ENCODE measurements at regions of chr15 and their contacts with region 1.

Region 1: GRCh38 chr15:40217159-40217824 is 21.6 kb upstream of the PAK6 start:
- DNase-seq: peak; percentile 55
- H3K4me3 ChIP-seq: no peak overlapping the region
- H3K27ac ChIP-seq: no peak overlapping the region
- H3K4me1 ChIP-seq: peaks cover 0 to 9% (median 3%) of the 10 kb centered on the region in 4 donors
- H3K27me3 ChIP-seq: no peaks in the 10 kb centered on the region
- CTCF ChIP-seq: peak; percentile 77 to 93 (median 89)
- EP300 ChIP-seq: no peak
- POLR2A ChIP-seq: no peak

Region 2: DNA sequence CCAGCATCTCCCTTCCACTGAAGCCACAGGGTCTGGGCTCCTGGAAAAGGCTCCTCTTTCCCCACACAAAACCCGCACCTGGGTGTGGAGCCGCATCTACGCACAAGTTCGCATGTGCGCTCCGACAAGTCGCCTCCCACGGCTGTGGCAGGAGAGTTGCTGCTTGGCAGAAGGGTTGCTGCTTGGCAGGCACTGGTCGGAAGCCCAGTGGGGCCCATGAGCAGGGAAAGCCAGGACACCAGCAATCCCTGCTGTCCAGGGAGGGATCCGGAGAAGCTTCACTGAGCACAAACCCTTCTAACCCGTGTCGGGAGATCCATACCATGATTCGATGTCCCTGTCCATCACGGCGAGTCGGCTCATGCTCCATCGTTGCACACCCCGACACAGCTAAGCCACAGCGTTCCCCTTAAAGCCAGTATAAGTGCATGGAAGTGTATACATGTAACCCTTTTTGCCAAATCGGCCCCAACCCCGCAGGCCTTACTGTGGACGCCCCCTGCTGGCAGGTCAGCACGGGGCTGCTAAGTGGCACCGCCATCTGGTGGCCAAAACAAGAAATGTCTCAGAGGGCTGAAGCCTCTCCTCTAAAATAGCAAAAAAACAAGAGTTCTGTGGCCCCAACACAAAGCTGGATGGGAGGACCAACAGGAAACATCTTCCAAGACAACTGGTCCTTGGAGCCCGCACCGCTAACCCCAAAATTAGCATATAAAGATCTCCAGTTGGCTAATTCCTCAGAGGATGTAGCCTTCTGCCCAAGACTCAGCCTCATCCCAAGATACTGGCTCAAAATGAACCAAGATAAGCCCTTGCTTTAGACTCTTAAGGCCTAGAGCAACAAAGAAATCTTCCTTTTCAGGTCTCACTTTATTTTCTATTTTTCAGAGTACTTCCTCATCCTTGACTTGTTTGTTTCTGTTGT is 57.3 kb after region 1 on chr15:
- in situ Hi-C with region 1: loop called in 3 of 4 experiments (anchors 5 kb)
- intact Hi-C with region 1: loop called (anchors 2 kb)
- DNase-seq: peak; percentile 86
- H3K4me3 ChIP-seq: no peak overlapping the region
- H3K27ac ChIP-seq: no peak overlapping the region
- H3K4me1 ChIP-seq: peaks cover 0 to 5% (median 3%) of the 10 kb centered on the region in 4 donors
- H3K27me3 ChIP-seq: peaks cover 9% of the 10 kb centered on the region
- CTCF ChIP-seq: peak; percentile 100
- EP300 ChIP-seq: no peak
- POLR2A ChIP-seq: no peak

Region 3: GRCh38 chr15:40549894-40550293 is 332.6 kb after region 1 on chr15:
- in situ Hi-C with region 1: no loop called
- intact Hi-C with region 1: loop called (anchors 5 kb)
- DNase-seq: no peak
- H3K4me3 ChIP-seq: no peak overlapping the region
- H3K27ac ChIP-seq: peak overlapping the region in 3 of 4 donors; percentile 17 to 53 (median 48)
- H3K4me1 ChIP-seq: peaks cover 0 to 2% (median 0%) of the 10 kb centered on the region in 4 donors
- H3K27me3 ChIP-seq: no peaks in the 10 kb centered on the region
- CTCF ChIP-seq: no peak
- EP300 ChIP-seq: no peak
- POLR2A ChIP-seq: no peak

Region 4: DNA sequence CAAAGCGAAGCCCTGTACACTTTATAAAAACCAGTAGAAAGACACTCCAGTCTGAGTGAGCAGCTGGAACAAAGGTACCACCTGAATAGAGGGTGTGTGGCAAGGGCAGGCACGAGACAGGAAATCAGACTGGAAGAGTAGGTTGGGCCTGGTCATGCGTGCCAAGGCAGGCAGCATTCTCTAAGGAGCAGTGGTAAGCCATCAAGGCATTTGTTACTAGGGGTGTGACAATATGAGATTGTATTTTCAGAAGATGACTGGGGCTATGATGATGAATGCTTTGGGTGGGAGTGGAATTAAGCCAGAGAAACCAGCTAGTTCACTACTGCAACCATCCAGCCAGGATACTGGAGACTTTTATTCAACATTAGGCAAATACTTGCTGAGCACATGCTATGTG is 1615.6 kb after region 1 on chr15:
- in situ Hi-C with region 1: no loop called
- intact Hi-C with region 1: no loop called
- DNase-seq: peak; percentile 26
- H3K4me3 ChIP-seq: no peak overlapping the region
- H3K27ac ChIP-seq: no peak overlapping the region
- H3K4me1 ChIP-seq: peaks cover 4 to 12% (median 6%) of the 10 kb centered on the region in 4 donors
- H3K27me3 ChIP-seq: no peaks in the 10 kb centered on the region
- CTCF ChIP-seq: no peak
- EP300 ChIP-seq: no peak
- POLR2A ChIP-seq: no peak

Measured in transverse colon (tissue), 4 donors.